ENCODE measurements at regions of chr1 and their contacts with region 1.

Region 1: DNA sequence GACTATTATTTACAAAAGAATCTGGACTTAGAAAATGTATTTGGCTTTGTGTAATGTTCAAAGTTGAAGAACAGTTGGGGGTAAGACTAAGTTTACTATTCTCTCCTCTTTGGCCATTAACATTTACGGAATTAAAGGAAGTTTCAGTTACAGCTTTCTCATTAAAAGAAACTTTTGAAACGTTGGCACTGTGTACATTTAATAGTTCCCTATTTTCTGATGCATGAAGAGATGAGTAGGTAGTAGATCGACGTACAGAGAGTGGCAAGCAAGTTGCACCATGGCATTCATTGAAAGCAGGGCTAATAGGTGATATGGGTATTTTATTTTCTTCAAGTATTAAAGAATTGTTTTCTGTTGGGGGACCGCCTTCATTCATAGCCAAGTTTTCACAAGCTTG is 3.2 kb downstream of the ASPM start:
- DNase-seq: no peak
- H3K4me3 ChIP-seq: no peak overlapping the region
- H3K27ac ChIP-seq: no peak overlapping the region
- H3K27me3 ChIP-seq: no peaks in the 10 kb centered on the region
- CTCF ChIP-seq: no peak

Region 2: GRCh38 chr1:197130677-197131304 is 12.5 kb before region 1 on chr1:
- CTCF ChIA-PET with region 1: interaction called, 12 read pairs
- POLR2A ChIA-PET with region 1: no interaction called
- DNase-seq: no peak
- H3K4me3 ChIP-seq: no peak overlapping the region
- H3K27ac ChIP-seq: no peak overlapping the region
- H3K27me3 ChIP-seq: no peaks in the 10 kb centered on the region
- CTCF ChIP-seq: peak; percentile 14; the same call in 1 of the 2 replicates

Region 3: DNA sequence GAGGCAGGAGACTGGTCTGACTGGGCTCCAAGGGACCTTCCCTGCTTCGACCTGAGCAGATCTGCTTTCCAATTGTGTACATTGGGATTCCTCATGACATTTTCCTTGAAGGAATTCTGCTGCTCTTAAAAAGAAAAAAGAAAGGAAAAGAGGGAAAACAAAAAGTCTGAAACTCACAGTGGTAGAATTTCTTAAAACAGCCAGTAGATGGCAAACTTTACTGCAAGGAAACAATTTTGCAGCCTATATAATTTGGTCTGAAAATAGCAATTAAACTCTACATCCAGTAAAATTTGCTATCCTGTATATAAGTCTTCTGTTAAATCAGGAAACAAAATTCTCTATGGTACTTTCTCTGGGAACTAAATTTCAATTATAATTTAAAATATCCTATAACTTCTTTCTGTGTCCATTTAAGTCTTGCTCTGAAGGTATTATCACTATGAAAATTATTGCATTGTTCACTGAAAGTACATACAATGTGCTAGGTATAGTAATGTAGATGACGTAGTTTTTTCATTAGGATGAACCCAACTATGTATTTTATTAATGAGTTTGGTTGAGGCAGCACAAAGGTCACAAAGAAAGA is 184.6 kb after region 1 on chr1:
- CTCF ChIA-PET with region 1: no interaction called
- POLR2A ChIA-PET with region 1: no interaction called
- DNase-seq: no peak
- H3K4me3 ChIP-seq: no peak overlapping the region
- H3K27ac ChIP-seq: no peak overlapping the region
- H3K27me3 ChIP-seq: no peaks in the 10 kb centered on the region
- CTCF ChIP-seq: peak; percentile 72